Cardiac septum (tissue), 1 donor: ENCODE measurements at regions of chr12 and their contacts with region 1.

Region 1: GRCh38 chr12:98516184-98516873 is 939 bp downstream of the TMPO start:
- DNase-seq: peak; percentile 83

Region 2: GRCh38 chr12:98096436-98096835 is 419.9 kb before region 1 on chr12:
- intact Hi-C with region 1: no loop called
- DNase-seq: no peak

Region 3: GRCh38 chr12:98424726-98425401 is 91.5 kb before region 1 on chr12:
- intact Hi-C with region 1: loop called (anchors 2 kb)
- DNase-seq: peak; percentile 77

Region 4: DNA sequence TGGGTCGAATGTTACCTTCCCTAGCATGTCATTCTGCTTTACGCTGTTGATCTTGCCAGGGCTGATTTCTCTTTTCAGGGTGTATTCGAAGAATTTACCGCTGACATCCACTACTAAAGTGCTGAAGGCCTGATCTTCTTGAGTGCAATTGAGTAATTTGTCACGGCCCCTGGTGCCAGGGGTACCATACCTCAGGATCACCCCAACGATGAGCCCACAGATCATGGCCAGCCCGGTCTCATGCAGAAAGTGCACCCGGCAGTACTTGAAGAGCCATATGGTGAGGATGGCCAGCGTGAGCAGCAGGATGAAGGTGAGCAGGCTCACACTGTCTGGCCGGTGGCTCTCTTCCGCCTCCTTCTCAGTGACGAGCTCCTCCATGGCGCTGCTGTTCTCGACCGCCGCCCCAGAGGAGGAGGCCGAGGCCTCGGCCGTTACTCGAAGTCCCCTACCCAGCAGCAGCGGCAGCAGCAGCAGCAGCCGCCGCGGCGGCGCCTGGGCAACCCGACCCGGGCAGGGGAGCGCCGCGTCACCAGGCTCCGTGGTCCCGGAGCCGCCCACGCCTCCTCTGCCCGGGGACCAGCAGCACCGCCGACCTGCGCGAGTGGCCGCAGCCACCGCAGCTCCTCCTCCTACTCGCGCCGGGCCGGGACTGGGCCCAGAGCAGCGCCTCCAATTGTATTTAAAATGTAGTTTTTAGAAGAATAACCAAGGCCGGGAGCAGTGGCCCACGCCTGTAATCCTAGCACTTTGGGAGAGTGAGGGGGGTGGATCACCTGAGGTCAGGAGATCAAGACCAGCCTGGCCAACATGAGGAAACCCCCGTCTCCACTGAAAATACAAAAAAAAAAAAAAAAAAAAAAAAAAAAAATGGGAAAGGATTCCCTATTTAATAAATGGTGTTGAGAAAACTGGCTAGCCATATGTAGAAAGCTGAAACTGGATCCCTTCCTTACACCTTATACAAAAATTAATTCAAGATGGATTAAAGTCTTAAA is 59.5 kb before region 1 on chr12:
- intact Hi-C with region 1: no loop called
- DNase-seq: peak; percentile 77

Region 5: DNA sequence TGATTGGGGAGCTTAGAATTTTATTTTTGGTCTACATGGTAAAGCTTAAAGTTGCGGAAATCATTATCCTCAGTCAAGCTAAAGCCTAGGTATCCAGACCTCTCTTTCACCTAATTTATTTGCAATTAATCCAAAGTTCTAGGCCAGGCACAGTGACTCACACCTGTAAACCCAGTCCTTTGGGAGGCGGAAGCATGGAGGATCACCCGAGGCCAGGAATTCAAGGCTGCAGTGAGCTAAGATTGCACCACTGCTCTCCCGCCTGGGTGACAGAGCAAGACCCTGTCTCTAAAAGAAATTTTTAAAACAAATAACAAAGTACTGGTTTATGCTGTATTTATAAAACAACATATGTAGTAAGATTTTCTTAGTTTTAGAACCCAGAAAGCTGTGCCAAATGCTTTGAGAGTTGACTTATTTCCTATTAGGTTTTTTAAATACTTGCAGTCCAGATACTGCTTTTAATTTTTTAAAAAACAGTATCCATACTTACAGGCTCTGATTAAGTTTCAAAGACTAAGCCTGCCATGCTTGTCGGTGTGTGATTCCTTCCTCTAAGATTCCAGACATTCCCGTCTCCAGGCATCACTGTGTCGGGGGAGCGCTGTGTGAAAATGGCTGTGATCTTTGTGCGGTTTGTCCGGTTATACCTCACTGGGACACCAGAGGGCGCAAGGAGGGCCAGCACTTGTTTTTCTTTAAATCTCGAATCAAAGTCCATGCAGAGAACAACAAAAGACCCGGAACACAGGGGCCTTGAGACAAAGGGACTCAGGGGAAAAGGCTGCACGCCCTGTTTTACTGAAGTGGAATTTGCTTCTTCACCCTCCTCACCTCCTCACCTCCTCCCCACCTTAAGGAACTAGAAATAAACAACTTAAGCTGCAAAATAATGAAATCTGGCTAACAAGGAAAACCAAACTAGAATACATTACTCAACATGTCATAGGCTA is 25.6 kb before region 1 on chr12:
- intact Hi-C with region 1: loop called (anchors 2 kb)
- DNase-seq: peak; percentile 93

Region 6: GRCh38 chr12:98644711-98645402 is 128.5 kb after region 1 on chr12 and contains the starts of genes APAF1 and IKBIP:
- intact Hi-C with region 1: loop called (anchors 10 kb)
- DNase-seq: peak; percentile 99
- total RNA-seq, gene APAF1: 5.1 TPM
- total RNA-seq, gene IKBIP: 7.1 TPM